ENCODE measurements at regions of chr2 and their contacts with region 1.

Region 1: GRCh38 chr2:218898109-218898878 is 17.6 kb downstream of the WNT10A start:
- DNase-seq: peak; percentile 60 to 90 (median 81)
- ATAC-seq: peak; percentile 10
- H3K4me3 ChIP-seq: peak overlapping the region in 1 of 2 experiments; percentile 57
- H3K4me3 Mint-ChIP-seq: peak overlapping the region; percentile 80
- H3K27ac ChIP-seq: no peak overlapping the region
- H3K27ac Mint-ChIP-seq: no peak overlapping the region
- H3K4me1 ChIP-seq: peaks cover 54% of the 10 kb centered on the region
- H3K4me1 Mint-ChIP-seq: peaks cover 45% of the 10 kb centered on the region
- H3K27me3 ChIP-seq: peaks cover 7 to 33% of the 10 kb centered on the region in 2 experiments
- H3K27me3 Mint-ChIP-seq: peaks cover 30% of the 10 kb centered on the region
- CTCF ChIP-seq: peak; percentile 99

Region 2: DNA sequence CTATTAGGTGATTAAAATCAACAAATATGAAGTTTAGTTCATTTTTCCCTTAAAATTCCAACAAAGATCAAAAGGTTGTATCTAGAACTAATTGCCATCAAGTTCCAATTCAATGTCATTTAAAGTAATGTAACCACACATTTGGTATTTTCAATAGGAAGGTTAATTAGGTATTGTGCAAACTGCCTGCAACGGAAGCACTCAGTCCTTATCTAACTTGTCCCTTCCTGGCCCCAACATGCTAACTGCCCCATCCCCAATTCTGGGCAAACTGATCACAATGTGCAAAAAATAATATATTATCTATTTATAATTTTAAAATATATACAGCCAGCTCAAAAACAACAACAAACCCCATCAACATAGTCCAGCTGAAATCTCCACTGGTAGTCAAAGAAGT is 446.2 kb before region 1 on chr2:
- CTCF ChIA-PET with region 1: no interaction called
- POLR2A ChIA-PET with region 1: no interaction called
- intact Hi-C with region 1: no loop called
- DNase-seq: no peak
- ATAC-seq: no peak
- H3K4me3 ChIP-seq: no peak overlapping the region
- H3K4me3 Mint-ChIP-seq: no peak overlapping the region
- H3K27ac ChIP-seq: no peak overlapping the region
- H3K27ac Mint-ChIP-seq: no peak overlapping the region
- H3K4me1 ChIP-seq: no peaks in the 10 kb centered on the region
- H3K4me1 Mint-ChIP-seq: no peaks in the 10 kb centered on the region
- H3K27me3 ChIP-seq: no peaks in the 10 kb centered on the region
- H3K27me3 Mint-ChIP-seq: no peaks in the 10 kb centered on the region
- CTCF ChIP-seq: no peak

Region 3: DNA sequence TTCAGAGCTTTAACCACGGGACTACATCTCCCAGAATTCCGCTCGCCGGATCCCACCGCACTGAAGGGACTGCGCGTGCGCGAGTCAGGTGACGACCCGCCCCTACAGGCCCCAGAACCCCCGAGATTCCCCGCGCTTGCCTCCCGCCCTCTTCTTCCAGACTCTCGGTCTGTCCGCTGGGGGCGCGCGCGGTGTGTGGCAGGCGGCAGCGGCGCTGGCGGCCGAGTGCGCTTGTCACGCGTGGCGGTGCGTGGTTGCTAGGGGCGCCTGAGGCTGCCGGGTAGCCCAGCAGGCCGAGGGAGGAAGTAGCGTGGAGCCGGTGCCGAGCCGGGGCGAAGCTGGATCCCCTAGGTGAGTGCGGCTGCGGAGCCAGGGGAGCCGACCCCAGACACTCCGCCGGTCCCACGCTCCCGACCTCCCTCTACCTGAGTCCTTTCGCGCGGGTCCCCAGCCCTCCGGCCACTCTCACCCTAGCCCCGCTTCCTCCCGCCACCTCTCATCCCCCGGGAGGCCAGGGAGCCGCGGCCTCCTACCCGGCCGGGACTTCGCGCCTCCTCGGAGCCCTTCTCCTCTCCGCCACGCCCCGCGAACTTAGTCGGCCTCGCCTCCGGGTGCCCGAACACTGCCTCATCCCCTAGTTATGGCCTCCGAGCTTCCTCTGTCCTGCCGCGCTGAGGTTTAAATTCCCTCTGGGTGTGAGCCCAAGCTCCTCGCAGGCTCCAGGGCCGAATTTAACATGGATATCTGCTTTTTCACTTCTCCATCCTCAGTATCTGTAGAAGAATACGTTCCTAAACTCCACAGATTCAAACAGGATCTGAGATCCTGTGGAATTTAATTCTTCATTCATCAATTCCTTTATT is 187.4 kb before region 1 on chr2 and contains the start of gene TTLL4:
- CTCF ChIA-PET with region 1: interaction called, 4 read pairs
- POLR2A ChIA-PET with region 1: interaction called, 4 read pairs
- intact Hi-C with region 1: loop called in 1 of 2 experiments (anchors 1 kb)
- DNase-seq: peak; percentile 97 to 99 (median 99)
- ATAC-seq: peak; percentile 99
- H3K4me3 ChIP-seq: peak within 1 kb of the TSS; percentile 86 to 92
- H3K4me3 Mint-ChIP-seq: peak within 1 kb of the TSS; percentile 91
- H3K27ac ChIP-seq: peak within 1 kb of the TSS; percentile 73 to 90
- H3K27ac Mint-ChIP-seq: peak within 1 kb of the TSS; percentile 84
- H3K4me1 ChIP-seq: peaks cover 13% of the 10 kb centered on the region
- H3K4me1 Mint-ChIP-seq: peaks cover 19% of the 10 kb centered on the region
- H3K27me3 ChIP-seq: no peaks in the 10 kb centered on the region
- H3K27me3 Mint-ChIP-seq: peaks cover 6% of the 10 kb centered on the region
- CTCF ChIP-seq: peak; percentile 76
- total RNA-seq, gene TTLL4: 6.9 to 8.1 TPM

Region 4: DNA sequence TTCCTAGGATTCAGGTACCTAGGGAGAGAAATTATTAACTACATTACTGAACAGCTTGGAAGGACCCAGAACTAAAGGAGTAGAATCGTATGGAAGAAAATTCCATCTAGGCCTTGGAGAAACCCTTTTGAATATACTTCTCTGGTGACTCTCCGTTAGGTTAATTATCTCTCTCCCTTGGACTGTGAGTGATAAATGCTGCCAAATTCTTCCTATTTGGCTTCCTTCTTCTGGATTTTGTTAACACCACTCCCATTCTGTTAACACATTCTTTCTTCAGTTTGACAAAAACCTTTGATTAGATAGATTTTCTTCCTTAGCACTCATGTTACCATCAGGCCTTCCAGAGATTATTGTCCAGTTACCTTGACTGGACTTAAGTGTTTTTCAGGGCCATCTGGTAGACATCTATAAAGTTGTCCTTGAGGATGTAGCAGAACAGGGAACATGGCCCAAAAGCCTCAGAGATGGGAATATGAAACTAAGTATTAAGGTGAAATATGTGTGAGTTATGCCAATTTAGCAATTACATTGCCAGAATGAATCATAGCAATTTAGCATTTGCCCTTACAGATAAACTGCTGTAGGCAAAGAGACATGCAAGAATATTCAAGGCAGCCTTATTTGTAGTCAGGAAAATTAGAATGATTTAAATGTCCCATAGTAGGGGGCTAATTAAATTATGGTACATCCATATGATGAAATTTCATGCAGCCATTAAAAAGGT is 109.6 kb before region 1 on chr2:
- CTCF ChIA-PET with region 1: no interaction called
- POLR2A ChIA-PET with region 1: no interaction called
- intact Hi-C with region 1: no loop called
- DNase-seq: no peak
- ATAC-seq: no peak
- H3K4me3 ChIP-seq: no peak overlapping the region
- H3K4me3 Mint-ChIP-seq: no peak overlapping the region
- H3K27ac ChIP-seq: no peak overlapping the region
- H3K27ac Mint-ChIP-seq: no peak overlapping the region
- H3K4me1 ChIP-seq: no peaks in the 10 kb centered on the region
- H3K4me1 Mint-ChIP-seq: no peaks in the 10 kb centered on the region
- H3K27me3 ChIP-seq: no peaks in the 10 kb centered on the region
- H3K27me3 Mint-ChIP-seq: peaks cover 29% of the 10 kb centered on the region
- CTCF ChIP-seq: no peak

Region 5: DNA sequence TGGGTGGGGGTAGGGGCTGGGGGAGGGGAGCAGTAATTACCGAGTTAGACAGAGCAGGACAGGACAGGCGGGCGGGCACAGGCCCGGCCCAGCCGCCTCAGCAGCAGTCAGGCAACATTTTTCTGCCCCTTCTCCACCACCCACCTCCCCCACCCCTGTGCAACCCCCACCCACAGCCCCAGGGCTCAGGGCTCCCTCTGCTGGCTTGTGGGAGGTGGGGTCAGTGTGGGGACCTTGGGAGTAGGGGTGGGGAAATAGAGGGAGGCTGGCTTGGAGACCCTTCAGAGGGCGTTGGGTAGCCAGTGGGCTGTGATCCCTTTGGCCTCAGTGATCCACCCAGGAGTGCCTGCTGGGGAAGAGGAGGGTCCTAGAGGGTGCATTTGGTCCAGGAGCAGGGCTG is 32.3 kb before region 1 on chr2:
- CTCF ChIA-PET with region 1: interaction called, 1,148 read pairs
- POLR2A ChIA-PET with region 1: interaction called, 272 read pairs
- intact Hi-C with region 1: no loop called
- DNase-seq: no peak
- ATAC-seq: no peak
- H3K4me3 ChIP-seq: no peak overlapping the region
- H3K4me3 Mint-ChIP-seq: no peak overlapping the region
- H3K27ac ChIP-seq: no peak overlapping the region
- H3K27ac Mint-ChIP-seq: no peak overlapping the region
- H3K4me1 ChIP-seq: peaks cover 8% of the 10 kb centered on the region
- H3K4me1 Mint-ChIP-seq: peaks cover 11% of the 10 kb centered on the region
- H3K27me3 ChIP-seq: peaks cover 11 to 15% of the 10 kb centered on the region in 2 experiments
- H3K27me3 Mint-ChIP-seq: peaks cover 50% of the 10 kb centered on the region
- CTCF ChIP-seq: no peak

Region 6: DNA sequence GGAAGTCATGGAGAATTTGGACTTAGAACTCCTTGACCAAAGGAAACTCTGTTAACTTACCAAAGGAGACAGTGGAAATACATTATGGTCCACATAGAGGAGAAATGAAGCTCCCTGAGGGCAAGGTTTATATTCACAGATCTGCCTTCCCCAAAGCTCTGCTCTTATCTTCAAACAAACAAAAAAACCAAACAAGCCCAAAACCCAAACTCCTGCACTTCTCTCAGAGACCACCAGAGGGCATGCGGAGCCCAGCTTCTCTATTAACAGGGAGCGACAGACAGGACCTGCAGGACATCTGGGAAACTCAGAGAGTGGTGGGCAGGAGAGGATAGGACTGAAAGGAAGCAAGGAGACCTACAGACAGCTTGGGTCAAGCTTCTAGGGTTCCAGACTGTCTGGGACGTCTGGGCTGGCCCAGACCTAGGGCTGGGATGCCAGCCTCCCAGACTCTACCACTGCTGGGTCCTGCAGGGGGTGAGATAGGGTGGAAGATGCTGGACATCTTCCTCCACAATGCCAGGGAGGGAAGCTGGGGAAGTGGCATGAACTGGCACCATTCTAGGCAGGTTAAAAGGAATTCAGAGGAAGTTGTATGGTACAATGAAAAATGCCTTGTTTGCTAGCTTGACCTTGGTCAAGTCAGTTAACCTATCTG is 21.6 kb before region 1 on chr2:
- CTCF ChIA-PET with region 1: interaction called, 1,148 read pairs
- POLR2A ChIA-PET with region 1: interaction called, 272 read pairs
- intact Hi-C with region 1: loop called (anchors 1 kb)
- DNase-seq: peak; percentile 61 to 86 (median 78)
- ATAC-seq: no peak
- H3K4me3 ChIP-seq: no peak overlapping the region
- H3K4me3 Mint-ChIP-seq: no peak overlapping the region
- H3K27ac ChIP-seq: no peak overlapping the region
- H3K27ac Mint-ChIP-seq: no peak overlapping the region
- H3K4me1 ChIP-seq: peaks cover 59% of the 10 kb centered on the region
- H3K4me1 Mint-ChIP-seq: peaks cover 41% of the 10 kb centered on the region
- H3K27me3 ChIP-seq: peaks cover 16 to 30% of the 10 kb centered on the region in 2 experiments
- H3K27me3 Mint-ChIP-seq: peaks cover 34% of the 10 kb centered on the region
- CTCF ChIP-seq: peak; percentile 99

Region 7: DNA sequence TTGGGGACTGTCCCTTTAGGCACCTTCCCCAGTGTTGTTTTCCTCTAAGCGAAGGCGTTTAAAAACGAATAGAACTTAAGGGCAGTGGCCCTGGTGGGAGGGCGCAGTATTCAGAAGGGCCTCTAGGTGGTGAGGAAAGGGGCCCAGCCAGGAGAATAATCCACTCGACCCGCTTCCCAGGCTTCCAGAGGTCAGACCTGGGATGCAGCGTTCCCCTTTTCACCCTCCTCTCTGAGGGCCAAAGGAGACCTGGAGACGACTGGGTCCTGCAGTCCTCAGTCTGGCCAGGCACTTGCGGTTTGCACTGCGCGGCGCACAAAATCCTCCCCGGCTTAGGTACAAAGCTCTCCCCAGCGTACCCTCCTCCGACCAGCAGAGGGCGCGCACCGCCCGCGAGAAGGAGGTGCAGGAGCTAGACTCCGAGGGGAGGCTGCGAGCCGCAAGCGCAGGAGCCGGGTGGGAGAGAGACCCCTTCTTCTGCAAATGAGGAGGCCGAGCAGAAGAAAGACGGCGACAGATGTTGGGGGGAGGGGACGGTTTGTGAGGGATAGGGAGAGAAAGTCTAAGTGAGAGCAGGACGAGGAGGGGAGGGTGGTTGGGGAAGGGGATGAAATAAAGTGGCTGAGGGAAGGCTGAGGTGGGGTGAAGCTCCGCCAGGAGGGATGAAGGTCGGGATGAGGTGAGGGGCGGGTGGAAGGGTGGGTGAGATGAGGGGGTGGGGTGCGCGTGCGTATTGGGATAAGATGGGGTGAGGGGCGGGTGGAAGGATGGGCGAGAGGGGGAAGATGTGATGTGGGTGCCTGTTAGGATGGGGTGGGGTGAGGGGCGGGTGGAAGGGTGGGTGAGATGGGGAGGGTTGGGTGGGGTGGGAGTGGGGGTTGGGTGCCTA is 81.8 kb after region 1 on chr2:
- CTCF ChIA-PET with region 1: interaction called, 13 read pairs
- POLR2A ChIA-PET with region 1: no interaction called
- intact Hi-C with region 1: no loop called
- DNase-seq: peak; percentile 72 to 88 (median 83)
- ATAC-seq: peak; percentile 89
- H3K4me3 ChIP-seq: peak overlapping the region; percentile 3 to 18
- H3K4me3 Mint-ChIP-seq: peak overlapping the region; percentile 76
- H3K27ac ChIP-seq: no peak overlapping the region
- H3K27ac Mint-ChIP-seq: no peak overlapping the region
- H3K4me1 ChIP-seq: peaks cover 31% of the 10 kb centered on the region
- H3K4me1 Mint-ChIP-seq: peaks cover 34% of the 10 kb centered on the region
- H3K27me3 ChIP-seq: peaks cover 49% of the 10 kb centered on the region in 2 experiments
- H3K27me3 Mint-ChIP-seq: peaks cover 64% of the 10 kb centered on the region
- CTCF ChIP-seq: peak; percentile 94